CD4-positive, alpha-beta T cell (primary cell): ENCODE measurements at regions of chr16 and their contacts with region 1.

Region 1: GRCh38 chr16:57071831-57072582 is 20.4 kb upstream of the CPNE2 start:
- DNase-seq: no peak
- ATAC-seq: no peak
- H3K4me3 ChIP-seq: no peak overlapping the region
- H3K4me3 Mint-ChIP-seq: no peak overlapping the region
- H3K27ac ChIP-seq: no peak overlapping the region
- H3K27ac Mint-ChIP-seq: peak overlapping the region; percentile 59
- H3K4me1 ChIP-seq: peaks cover 12% of the 10 kb centered on the region
- H3K4me1 Mint-ChIP-seq: peaks cover 4% of the 10 kb centered on the region
- H3K27me3 ChIP-seq: no peaks in the 10 kb centered on the region
- H3K27me3 Mint-ChIP-seq: no peaks in the 10 kb centered on the region
- CTCF ChIP-seq: no peak

Region 2: DNA sequence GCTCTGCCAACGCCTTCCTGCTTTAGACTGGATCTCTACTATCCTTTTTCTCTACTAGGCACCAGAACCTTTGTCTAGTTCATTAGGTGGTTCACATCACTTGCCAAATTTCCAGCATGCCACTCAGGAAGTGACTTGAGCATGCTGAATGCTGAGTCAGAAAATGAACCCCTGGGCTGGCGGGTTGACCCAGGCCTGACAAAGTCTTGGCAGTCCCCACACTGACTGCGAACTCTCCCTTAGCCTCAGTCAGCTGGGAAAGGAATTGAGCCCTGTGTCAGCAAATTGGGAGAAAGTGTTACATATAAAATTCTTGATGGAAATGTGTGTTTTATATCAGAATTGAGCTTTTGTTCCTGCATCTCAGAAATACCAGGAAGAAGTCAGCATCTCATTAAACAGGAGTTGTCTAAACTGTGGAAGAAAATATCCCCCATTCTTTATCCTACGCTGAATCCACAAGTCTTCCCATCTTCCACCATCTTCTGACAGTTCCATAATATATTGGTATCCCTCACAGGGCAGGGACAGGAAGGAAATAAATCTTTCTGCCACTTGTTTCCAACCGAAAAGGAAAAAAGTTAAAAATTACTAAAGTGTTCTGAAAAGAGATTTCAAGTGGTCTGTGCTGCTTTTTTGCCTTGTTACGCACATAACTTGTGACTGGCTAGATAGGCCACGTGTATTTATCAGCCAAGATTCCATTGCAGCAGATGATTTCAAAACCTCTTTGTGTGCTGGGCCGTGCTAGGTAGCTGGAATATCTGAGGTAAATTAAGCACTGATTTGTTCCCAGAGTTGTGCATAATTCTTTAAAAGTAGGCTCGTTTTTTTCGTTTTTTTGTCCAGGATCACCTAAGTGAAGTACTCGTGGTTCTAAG is 223.7 kb before region 1 on chr16:
- CTCF ChIA-PET with region 1: no interaction called
- POLR2A ChIA-PET with region 1: no interaction called
- intact Hi-C with region 1: loop called in 1 of 2 experiments (anchors 10 kb)
- DNase-seq: no peak
- ATAC-seq: no peak
- H3K4me3 ChIP-seq: no peak overlapping the region
- H3K4me3 Mint-ChIP-seq: no peak overlapping the region
- H3K27ac ChIP-seq: no peak overlapping the region
- H3K27ac Mint-ChIP-seq: peak overlapping the region; percentile 87
- H3K4me1 ChIP-seq: peaks cover 18% of the 10 kb centered on the region
- H3K4me1 Mint-ChIP-seq: peaks cover 15% of the 10 kb centered on the region
- H3K27me3 ChIP-seq: no peaks in the 10 kb centered on the region
- H3K27me3 Mint-ChIP-seq: no peaks in the 10 kb centered on the region
- CTCF ChIP-seq: no peak